CD8-positive, alpha-beta memory T cell (primary cell): ENCODE measurements at regions of chr2 and their contacts with region 1.

Region 1: GRCh38 chr2:101419096-101419663 is 31.9 kb upstream of the CREG2 start:
- DNase-seq: peak; percentile 28 to 61 (median 40)
- H3K4me3 ChIP-seq: no peak overlapping the region
- H3K4me3 Mint-ChIP-seq: no peak overlapping the region
- H3K27ac ChIP-seq: no peak overlapping the region
- H3K27ac Mint-ChIP-seq: no peak overlapping the region
- H3K4me1 ChIP-seq: no peaks in the 10 kb centered on the region
- H3K4me1 Mint-ChIP-seq: no peaks in the 10 kb centered on the region
- H3K27me3 ChIP-seq: no peaks in the 10 kb centered on the region
- H3K27me3 Mint-ChIP-seq: peaks cover 2 to 22% of the 10 kb centered on the region in 2 donors

Region 2: DNA sequence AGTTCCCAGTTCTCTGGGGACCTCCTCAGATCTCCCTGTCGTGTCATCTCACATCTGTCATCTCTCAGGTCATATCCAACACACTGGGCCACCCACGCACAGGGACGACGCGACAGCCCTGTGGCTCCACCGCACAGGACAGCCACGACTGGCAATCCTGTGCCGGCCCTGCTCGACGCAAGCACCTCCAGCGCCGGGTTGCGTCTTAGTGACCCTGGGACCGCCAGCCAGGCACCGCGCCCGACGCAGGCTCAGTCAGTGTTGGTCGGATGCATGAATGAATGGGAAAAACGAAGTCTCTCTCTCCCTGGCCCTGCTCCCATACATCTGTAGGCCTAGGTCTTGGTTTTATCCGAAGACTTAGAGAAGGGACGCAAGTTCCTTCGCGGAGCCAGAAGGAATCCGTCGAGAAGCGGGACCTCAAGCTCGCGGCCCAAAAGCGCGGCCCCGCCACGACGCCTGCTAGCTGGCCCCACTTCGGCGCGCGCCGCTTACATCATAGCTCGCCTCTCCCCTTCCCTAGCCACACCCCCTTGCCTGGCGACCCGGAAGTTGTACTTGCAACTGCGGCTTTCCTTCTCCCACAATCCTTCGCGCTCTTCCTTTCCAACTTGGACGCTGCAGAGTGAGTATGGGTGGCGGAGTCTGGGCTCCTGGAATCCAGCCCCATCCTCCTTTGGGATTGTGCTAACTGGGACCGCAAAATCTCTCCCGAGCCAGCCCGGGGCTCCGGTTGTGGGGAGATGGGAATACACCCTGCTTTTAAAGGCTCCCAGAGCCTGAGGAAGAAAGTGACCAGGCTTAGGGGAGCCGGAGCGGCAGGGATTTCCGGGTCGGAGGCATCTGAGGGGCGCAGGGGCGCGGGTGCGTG is 417.3 kb before region 1 on chr2 and contains the start of gene RPL31:
- CTCF ChIA-PET with region 1: no interaction called
- POLR2A ChIA-PET with region 1: no interaction called
- DNase-seq: peak; percentile 93 to 98 (median 94)
- H3K4me3 ChIP-seq: peak within 1 kb of the TSS; percentile 94
- H3K4me3 Mint-ChIP-seq: peak within 1 kb of the TSS; percentile 93 to 100 (median 96)
- H3K27ac ChIP-seq: peak within 1 kb of the TSS; percentile 89
- H3K27ac Mint-ChIP-seq: peak within 1 kb of the TSS; percentile 92 to 99 (median 98)
- H3K4me1 ChIP-seq: peaks cover 27% of the 10 kb centered on the region
- H3K4me1 Mint-ChIP-seq: peaks cover 41 to 54% (median 46%) of the 10 kb centered on the region in 3 donors
- H3K27me3 ChIP-seq: no peaks in the 10 kb centered on the region
- H3K27me3 Mint-ChIP-seq: no peaks in the 10 kb centered on the region
- total RNA-seq, gene RPL31: 1,340 to 1,381 TPM

Region 3: GRCh38 chr2:101272045-101272784 is 147.0 kb before region 1 on chr2:
- CTCF ChIA-PET with region 1: no interaction called
- POLR2A ChIA-PET with region 1: interaction called, 12 read pairs
- DNase-seq: no peak
- H3K4me3 ChIP-seq: no peak overlapping the region
- H3K4me3 Mint-ChIP-seq: no peak overlapping the region
- H3K27ac ChIP-seq: no peak overlapping the region
- H3K27ac Mint-ChIP-seq: peak overlapping the region; percentile 43 to 90 (median 72)
- H3K4me1 ChIP-seq: peaks cover 12% of the 10 kb centered on the region
- H3K4me1 Mint-ChIP-seq: peaks cover 28 to 55% (median 53%) of the 10 kb centered on the region in 3 donors
- H3K27me3 ChIP-seq: no peaks in the 10 kb centered on the region
- H3K27me3 Mint-ChIP-seq: no peaks in the 10 kb centered on the region

Region 4: DNA sequence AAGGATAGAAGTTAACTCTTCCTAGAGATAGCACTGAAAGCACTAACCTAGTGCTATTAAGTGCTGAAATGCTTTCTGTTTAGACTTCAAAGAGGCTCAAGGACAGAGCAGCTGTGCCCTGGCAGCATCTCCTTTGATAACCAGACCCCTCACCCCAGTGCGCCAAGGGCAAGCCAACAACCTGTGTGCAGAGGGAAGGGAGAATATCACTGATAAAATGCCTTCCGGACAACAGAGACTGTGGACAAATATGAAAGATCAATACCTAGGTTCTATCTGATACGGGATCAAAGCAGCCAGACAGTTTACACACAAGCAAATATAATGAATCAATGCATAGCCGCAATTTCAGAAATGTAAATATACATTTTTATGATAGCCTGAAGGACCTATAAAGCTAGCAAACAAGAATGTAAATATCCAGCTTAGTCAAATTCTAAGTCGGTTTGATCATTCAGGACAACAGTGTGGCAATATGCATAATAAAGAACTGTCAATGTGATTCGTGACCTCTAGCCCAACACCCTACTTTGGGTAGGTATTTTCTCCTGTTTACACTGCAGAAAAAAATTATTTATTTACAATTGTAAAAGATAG is 147.6 kb after region 1 on chr2:
- CTCF ChIA-PET with region 1: no interaction called
- POLR2A ChIA-PET with region 1: no interaction called
- DNase-seq: no peak
- H3K4me3 ChIP-seq: no peak overlapping the region
- H3K4me3 Mint-ChIP-seq: no peak overlapping the region
- H3K27ac ChIP-seq: no peak overlapping the region
- H3K27ac Mint-ChIP-seq: no peak overlapping the region
- H3K4me1 ChIP-seq: peaks cover 29% of the 10 kb centered on the region
- H3K4me1 Mint-ChIP-seq: peaks cover 19 to 32% (median 24%) of the 10 kb centered on the region in 3 donors
- H3K27me3 ChIP-seq: no peaks in the 10 kb centered on the region
- H3K27me3 Mint-ChIP-seq: peaks cover 10 to 21% of the 10 kb centered on the region in 2 donors

Region 5: GRCh38 chr2:101831351-101831865 is 412.2 kb after region 1 on chr2:
- CTCF ChIA-PET with region 1: interaction called, 36 read pairs
- POLR2A ChIA-PET with region 1: interaction called, 5 read pairs
- DNase-seq: peak; percentile 20 to 70 (median 36)
- H3K4me3 ChIP-seq: no peak overlapping the region
- H3K4me3 Mint-ChIP-seq: peak overlapping the region in 2 of 7 donors; percentile 2 to 37
- H3K27ac ChIP-seq: no peak overlapping the region
- H3K27ac Mint-ChIP-seq: peak overlapping the region in 6 of 8 donors; percentile 10 to 89 (median 60)
- H3K4me1 ChIP-seq: peaks cover 54% of the 10 kb centered on the region
- H3K4me1 Mint-ChIP-seq: peaks cover 52 to 53% (median 52%) of the 10 kb centered on the region in 3 donors
- H3K27me3 ChIP-seq: no peaks in the 10 kb centered on the region
- H3K27me3 Mint-ChIP-seq: no peaks in the 10 kb centered on the region

Region 6: DNA sequence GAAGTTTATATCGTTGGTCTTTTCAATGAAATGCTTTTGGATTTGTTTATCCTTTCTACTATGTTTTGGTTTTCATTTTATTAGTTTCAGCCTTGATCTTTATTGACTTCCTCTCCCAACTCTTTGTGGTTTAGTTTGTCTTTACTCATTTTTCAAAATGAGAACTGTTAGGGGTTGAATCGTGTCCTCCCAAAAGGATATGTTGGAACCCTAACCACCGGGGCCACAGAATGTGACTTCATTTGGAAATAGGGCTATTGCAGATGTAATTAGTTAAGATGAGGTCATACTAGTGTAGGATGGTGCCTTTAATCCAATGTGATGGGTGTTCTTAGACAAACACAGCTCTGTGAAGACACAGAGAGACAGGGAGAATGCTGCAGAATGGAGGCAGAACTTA is 512.2 kb after region 1 on chr2:
- CTCF ChIA-PET with region 1: no interaction called
- POLR2A ChIA-PET with region 1: no interaction called
- DNase-seq: no peak
- H3K4me3 ChIP-seq: no peak overlapping the region
- H3K4me3 Mint-ChIP-seq: no peak overlapping the region
- H3K27ac ChIP-seq: no peak overlapping the region
- H3K27ac Mint-ChIP-seq: no peak overlapping the region
- H3K4me1 ChIP-seq: no peaks in the 10 kb centered on the region
- H3K4me1 Mint-ChIP-seq: no peaks in the 10 kb centered on the region
- H3K27me3 ChIP-seq: no peaks in the 10 kb centered on the region
- H3K27me3 Mint-ChIP-seq: peaks cover 6 to 32% of the 10 kb centered on the region in 2 donors